Activated T-helper 2 cell treated with anti-CD3 and anti-CD28 coated beads, Interferon-gamma antibody, Interleukin-2, Interleukin-4, amounts not matched to agents 10 μg/mL and 5 μg/mL and 100 μg/mL, durations not matched to agents 14 hours and 24 hours and 36 hours (primary cell): ENCODE measurements at regions of chr2 and their contacts with region 1.

Region 1: DNA sequence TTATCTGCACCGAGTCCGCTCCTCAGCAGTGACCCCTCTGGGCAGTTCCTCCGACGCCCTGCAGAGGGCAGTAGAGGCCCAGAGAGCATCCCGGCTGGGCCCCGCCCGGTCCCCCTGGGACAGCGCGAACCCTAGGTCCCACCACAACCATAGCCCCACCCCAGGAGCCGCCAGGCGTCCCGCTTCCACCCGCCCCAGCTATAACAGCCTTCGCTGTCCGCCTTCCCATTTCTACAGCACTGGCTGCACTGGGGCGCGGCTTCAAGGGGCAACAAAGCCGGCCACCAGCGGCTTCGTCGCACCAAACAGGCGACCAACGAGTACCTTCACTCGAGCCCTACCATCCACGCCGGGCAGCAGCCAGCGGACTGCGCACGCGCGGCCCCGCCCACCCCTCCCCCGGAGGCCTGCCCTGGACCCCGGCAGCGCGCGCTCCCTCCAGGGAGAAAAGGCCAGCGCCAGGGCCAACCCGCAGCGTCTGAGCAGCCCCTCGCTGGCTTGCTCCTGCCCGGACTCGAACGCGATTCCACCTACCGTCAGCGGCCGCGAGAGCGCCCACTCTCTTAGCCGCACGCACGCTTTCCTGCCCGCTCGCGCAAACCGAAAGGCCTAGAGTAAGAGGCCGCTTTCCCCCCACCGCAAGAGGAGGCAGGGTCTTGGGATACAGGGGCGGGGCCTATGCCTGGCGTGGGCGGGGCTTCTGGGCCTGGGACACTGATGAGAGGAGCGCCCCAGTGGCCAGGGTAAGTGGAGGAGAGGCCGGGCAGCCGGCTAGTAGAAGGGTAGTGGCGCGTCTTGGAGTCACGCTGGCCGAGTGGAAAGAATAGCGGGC is at the start of gene NHEJ1:
- DNase-seq: peak; percentile 90
- H3K4me3 Mint-ChIP-seq: peak within 1 kb of the TSS; percentile 87
- H3K27ac Mint-ChIP-seq: peak within 1 kb of the TSS; percentile 93
- H3K4me1 Mint-ChIP-seq: peaks cover 17% of the 10 kb centered on the region
- H3K27me3 Mint-ChIP-seq: no peaks in the 10 kb centered on the region
- total RNA-seq, gene NHEJ1: 15.9 and 22.9 TPM in 2 replicates

Region 2: DNA sequence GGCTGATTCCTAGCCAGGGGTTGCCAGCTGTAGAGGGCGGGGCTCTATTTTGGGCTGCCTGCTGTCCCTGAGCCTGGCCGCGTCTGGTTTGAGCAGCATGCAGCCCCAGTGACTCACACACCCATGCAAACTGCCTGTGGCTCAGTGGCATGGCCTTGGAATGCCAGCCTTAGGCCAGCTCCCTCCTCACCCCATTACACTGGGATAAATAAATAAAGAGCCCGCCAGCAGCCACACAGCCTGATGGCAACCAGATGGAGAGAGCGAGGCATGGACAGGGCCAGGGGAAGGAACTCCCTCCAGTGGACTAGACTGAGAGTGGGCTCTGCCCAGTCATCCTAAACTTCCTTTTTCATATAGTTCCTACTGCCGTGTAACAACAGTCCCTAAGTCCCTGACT is 18.1 kb before region 1 on chr2:
- intact Hi-C with region 1: no loop called
- DNase-seq: no peak
- H3K4me3 Mint-ChIP-seq: no peak overlapping the region
- H3K27ac Mint-ChIP-seq: no peak overlapping the region
- H3K4me1 Mint-ChIP-seq: no peaks in the 10 kb centered on the region
- H3K27me3 Mint-ChIP-seq: no peaks in the 10 kb centered on the region

Region 3: GRCh38 chr2:219206442-219207253 is 46.2 kb after region 1 on chr2 and contains the start of gene ZFAND2B:
- intact Hi-C with region 1: loop called (anchors 1 kb)
- DNase-seq: peak; percentile 94
- H3K4me3 Mint-ChIP-seq: peak within 1 kb of the TSS; percentile 84
- H3K27ac Mint-ChIP-seq: peak within 1 kb of the TSS; percentile 90
- H3K4me1 Mint-ChIP-seq: peaks cover 38% of the 10 kb centered on the region
- H3K27me3 Mint-ChIP-seq: no peaks in the 10 kb centered on the region
- total RNA-seq, gene ZFAND2B: 27.3 and 33.5 TPM in 2 replicates

Region 4: DNA sequence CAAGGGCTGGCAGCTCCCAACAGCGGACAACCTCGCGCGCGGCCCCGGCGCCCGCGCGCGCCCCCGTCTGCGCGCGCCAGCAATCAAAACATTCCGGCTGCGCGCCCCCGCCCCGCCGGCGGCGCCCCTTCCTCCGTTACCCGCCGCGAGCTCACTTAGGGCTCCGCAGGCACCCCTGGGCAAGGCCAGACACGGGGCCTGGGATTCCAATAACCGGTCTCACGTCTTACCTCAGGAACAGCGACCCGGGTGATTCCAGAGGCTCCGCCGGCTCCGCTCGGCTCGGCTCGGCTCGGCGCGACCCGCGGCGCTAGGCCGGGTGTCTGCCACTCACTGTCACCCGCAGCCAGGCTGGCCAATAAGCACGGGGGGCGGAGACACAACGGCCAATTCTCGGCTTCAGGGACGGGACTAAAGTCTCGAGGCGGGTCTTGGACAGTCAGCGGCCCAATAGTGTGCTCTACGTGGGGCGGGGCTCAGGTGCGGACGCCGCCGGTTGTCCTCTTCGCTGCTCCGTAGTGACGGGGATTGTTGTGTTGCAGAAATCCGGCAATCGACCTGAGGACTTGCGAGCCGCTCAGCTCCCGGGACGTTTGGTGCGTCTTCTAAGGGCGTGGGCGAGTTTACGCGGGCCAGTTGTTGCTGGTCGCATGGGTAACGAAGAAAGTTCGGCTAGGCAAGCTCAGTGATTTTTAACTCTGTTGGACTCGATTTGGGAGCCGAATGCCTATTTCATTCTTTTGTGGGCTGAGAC is 69.1 kb after region 1 on chr2 and contains the starts of genes ANKZF1 and ATG9A:
- intact Hi-C with region 1: loop called (anchors 1 kb)
- DNase-seq: peak; percentile 99
- H3K4me3 Mint-ChIP-seq: peak within 1 kb of the TSS; percentile 97
- H3K27ac Mint-ChIP-seq: peak within 1 kb of the TSS; percentile 99
- H3K4me1 Mint-ChIP-seq: peaks cover 33% of the 10 kb centered on the region
- H3K27me3 Mint-ChIP-seq: no peaks in the 10 kb centered on the region
- total RNA-seq, gene ANKZF1: 133 and 142 TPM in 2 replicates
- total RNA-seq, gene ATG9A: 53.1 and 60.5 TPM in 2 replicates

Region 5: GRCh38 chr2:219278655-219279516 is 118.5 kb after region 1 on chr2 and contains the start of gene DNAJB2:
- intact Hi-C with region 1: loop called (anchors 1 kb)
- DNase-seq: peak; percentile 98
- H3K4me3 Mint-ChIP-seq: peak within 1 kb of the TSS; percentile 85
- H3K27ac Mint-ChIP-seq: peak within 1 kb of the TSS; percentile 91
- H3K4me1 Mint-ChIP-seq: peaks cover 39% of the 10 kb centered on the region
- H3K27me3 Mint-ChIP-seq: peaks cover 3% of the 10 kb centered on the region
- total RNA-seq, gene DNAJB2: 49.8 and 55.6 TPM in 2 replicates

Region 6: DNA sequence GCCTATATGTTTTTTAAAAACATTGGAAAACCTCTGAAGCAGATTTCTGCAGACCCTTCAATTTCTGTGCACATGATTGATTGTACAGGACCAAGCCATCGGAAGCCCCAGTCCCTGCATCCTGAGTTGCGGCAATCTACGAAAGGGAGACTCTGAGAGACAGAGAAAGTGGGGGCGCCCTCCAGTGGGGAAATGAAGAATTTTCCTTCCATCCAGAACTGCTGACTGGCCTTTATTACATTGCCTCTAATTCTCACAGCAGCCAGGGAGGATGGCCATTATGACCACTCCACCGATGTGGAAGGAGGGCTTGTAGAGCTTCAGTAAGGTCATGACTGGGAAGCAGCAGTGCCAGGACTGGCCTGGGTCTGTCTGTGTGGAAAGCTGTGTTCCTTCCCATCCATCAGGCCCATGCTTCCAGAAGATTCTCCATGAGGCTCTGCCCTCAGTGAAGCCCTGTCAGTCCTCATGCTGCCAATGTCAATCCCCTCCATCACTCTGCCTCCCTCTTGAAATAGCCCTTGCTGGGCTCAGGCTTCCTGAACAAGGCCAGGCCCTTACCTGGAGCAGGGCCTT is 192.1 kb after region 1 on chr2:
- intact Hi-C with region 1: loop called (anchors 1 kb)
- DNase-seq: peak; percentile 48
- H3K4me3 Mint-ChIP-seq: no peak overlapping the region
- H3K27ac Mint-ChIP-seq: no peak overlapping the region
- H3K4me1 Mint-ChIP-seq: peaks cover 2% of the 10 kb centered on the region
- H3K27me3 Mint-ChIP-seq: peaks cover 27% of the 10 kb centered on the region

Region 7: DNA sequence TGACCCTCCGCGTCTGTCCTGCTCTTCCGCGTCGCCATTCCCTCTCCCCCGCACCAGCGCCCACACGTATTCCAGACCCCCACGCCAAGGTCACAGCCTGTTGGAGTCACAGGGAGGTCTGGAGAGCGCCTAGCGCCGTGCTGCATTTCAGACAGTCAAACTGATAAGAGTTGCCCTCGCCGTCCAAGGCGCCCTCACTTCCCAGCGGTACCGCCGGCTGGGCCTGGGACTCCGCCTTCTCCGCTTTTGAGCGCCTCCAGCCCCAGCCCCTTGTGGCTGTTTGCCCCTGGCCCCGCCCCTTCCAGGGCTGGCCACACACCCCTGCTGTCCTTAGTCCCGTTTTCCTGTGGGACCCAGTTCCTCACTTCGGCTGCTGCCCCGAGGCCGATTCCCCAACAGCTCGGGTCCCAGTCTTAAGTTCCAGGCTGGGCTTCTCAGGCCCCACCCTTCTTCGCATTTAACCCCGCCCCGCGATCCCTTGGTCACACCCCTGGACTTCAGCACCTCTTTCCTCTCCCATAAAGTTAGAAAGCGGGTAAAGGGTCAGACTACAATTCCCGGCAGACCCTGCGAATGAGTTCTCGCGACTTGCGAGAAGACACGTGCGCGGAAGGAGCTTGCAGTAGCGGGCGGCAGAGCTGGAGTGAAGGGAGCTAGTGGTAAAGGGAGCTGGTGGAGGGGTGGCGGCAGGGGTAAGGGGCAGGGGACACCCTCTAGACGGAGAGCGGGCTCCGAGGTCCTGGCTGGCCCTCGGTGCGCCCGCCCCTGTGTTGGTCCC is 338.1 kb after region 1 on chr2 and contains the start of gene GMPPA:
- intact Hi-C with region 1: loop called (anchors 1 kb)
- DNase-seq: peak; percentile 95
- H3K4me3 Mint-ChIP-seq: peak within 1 kb of the TSS; percentile 96
- H3K27ac Mint-ChIP-seq: peak within 1 kb of the TSS; percentile 91
- H3K4me1 Mint-ChIP-seq: peaks cover 33% of the 10 kb centered on the region
- H3K27me3 Mint-ChIP-seq: peaks cover 43% of the 10 kb centered on the region
- total RNA-seq, gene GMPPA: 52.0 and 52.9 TPM in 2 replicates